ENCODE measurements at regions of chr15 and their contacts with region 1.

Region 1: DNA sequence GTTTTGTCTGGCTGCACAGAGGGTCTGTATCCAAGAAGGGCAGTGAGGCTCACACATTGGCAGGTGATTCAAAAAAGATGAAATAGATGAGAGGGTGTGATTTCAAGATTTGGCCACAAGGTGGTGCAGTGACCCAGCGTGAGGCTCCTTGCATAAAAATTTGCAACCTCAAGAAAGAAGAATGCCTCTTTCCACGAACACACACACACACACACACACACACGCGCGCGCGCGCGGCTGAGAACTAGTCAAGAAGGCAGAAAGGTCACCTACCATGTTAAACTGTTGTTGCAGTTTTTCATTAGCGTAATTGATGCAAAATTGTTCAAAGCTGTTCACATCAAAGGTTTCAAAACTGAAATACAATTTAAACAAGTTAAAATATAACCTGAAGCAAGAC is 39.2 kb downstream of the MYO5C start:
- DNase-seq: peak; percentile 59 to 79
- H3K4me3 ChIP-seq: no peak overlapping the region
- H3K27ac ChIP-seq: no peak overlapping the region
- H3K4me1 ChIP-seq: peaks cover 11 to 15% (median 11%) of the 10 kb centered on the region in 4 experiments
- H3K27me3 ChIP-seq: no peaks in the 10 kb centered on the region
- CTCF ChIP-seq: peak; percentile 35 to 72 (median 63)
- EP300 ChIP-seq: no peak
- POLR2A ChIP-seq: no peak
- RAD21 ChIP-seq: peak; percentile 82 to 89

Region 2: DNA sequence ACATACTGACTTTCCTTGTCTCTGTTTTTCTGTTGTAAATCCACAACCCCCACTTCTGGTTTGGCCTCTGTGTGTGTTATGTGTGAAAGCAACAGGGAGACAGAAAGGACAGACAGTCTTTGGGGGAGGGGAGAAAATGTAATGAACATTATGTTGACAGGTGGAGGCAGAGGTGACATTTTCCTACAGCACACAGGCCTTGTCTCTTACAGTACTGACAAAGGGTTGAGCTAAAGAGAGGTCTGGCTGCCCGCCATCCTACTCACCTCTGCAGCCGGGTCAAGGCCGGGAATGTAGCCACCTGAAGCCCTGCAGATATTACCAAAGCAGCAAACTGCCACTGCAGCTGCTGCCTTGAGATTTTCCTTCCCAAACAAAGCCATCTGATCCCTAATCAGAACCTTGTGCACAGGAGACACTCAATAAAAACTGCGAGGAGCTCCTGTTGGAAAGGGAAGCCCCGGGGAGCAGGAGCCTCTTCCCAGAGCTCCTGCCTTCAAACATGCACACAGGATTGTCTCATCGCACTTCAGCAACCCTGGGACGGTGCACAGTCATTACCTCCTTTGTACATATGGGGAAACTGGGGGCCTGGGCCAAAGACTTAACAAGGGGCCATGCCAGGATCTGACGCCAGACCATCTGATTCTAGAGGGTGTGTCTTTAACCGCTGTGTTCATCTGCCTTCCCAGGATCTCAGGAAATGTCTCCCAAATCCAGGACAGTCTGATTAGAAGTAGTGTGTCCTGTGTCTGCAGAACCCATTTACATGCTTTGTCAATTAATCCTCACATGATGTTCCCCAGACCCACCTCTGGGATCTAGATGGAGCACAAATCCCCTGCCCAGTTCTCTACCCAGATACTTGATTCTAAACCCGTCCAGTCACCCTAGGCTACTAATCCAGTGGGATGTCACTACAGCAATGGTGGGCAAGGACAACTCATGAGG is 25.0 kb after region 1 on chr15:
- CTCF ChIA-PET with region 1: interaction called, 33 read pairs
- POLR2A ChIA-PET with region 1: interaction called, 8 read pairs
- DNase-seq: no peak
- H3K4me3 ChIP-seq: no peak overlapping the region
- H3K27ac ChIP-seq: no peak overlapping the region
- H3K4me1 ChIP-seq: no peaks in the 10 kb centered on the region
- H3K27me3 ChIP-seq: no peaks in the 10 kb centered on the region
- CTCF ChIP-seq: no peak
- EP300 ChIP-seq: no peak
- POLR2A ChIP-seq: no peak
- RAD21 ChIP-seq: no peak

Region 3: DNA sequence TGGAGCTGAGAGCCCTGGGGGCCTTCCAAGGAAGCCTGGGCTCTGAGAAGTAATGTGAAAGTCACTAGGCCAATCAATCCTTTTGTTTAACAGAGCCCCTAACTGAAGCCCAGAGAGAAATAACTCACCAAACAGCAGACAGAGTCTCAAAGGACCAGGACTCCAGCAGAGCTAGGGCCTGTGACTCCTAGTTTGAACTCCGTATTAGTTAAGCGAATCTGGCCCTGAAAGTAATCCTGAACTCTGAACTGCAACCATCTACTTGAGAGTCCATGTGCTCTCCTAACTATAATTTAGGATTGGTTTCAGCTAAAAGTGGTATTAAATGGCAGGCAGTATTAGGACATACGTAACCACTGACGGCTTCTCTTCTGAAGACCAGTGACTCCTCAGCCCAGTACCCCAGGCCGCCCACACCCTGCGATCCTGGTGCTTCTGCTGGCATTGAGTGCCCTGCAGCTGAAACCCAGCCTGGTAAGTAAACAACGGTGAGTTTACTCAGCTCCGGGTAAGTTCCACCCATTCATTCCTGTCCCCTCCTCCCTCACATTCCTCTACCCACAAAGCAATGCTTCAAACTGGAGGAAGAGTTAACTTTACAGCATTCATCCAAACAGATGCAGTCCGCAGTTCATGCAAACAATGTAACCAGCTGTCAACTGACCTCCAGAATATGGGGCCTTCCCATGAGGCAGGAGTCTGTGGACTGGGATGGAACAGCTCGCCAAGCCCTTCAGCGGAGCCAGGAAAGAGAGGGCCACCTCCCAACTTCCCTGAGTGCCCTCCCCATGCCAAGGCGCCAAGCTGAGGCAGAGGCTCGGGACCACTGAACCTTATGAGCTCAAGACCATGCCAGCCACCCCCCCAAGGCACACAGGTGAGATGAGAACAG is 31.9 kb after region 1 on chr15:
- CTCF ChIA-PET with region 1: interaction called, 14 read pairs
- POLR2A ChIA-PET with region 1: interaction called, 8 read pairs
- DNase-seq: peak in 1 of 2 experiments; percentile 43
- H3K4me3 ChIP-seq: no peak overlapping the region
- H3K27ac ChIP-seq: no peak overlapping the region
- H3K4me1 ChIP-seq: peaks cover 0 to 8% (median 3%) of the 10 kb centered on the region in 4 experiments; a peak in 2 of 7 replicates
- H3K27me3 ChIP-seq: no peaks in the 10 kb centered on the region
- CTCF ChIP-seq: no peak
- EP300 ChIP-seq: no peak
- POLR2A ChIP-seq: no peak
- RAD21 ChIP-seq: no peak

Region 4: GRCh38 chr15:52717894-52718293 is 461.5 kb after region 1 on chr15:
- CTCF ChIA-PET with region 1: interaction called, 10 read pairs
- POLR2A ChIA-PET with region 1: no interaction called
- DNase-seq: no peak
- H3K4me3 ChIP-seq: no peak overlapping the region
- H3K27ac ChIP-seq: no peak overlapping the region
- H3K4me1 ChIP-seq: no peaks in the 10 kb centered on the region
- H3K27me3 ChIP-seq: no peaks in the 10 kb centered on the region; a peak in 1 of 7 replicates
- CTCF ChIP-seq: no peak
- EP300 ChIP-seq: no peak
- POLR2A ChIP-seq: no peak
- RAD21 ChIP-seq: no peak

Region 5: DNA sequence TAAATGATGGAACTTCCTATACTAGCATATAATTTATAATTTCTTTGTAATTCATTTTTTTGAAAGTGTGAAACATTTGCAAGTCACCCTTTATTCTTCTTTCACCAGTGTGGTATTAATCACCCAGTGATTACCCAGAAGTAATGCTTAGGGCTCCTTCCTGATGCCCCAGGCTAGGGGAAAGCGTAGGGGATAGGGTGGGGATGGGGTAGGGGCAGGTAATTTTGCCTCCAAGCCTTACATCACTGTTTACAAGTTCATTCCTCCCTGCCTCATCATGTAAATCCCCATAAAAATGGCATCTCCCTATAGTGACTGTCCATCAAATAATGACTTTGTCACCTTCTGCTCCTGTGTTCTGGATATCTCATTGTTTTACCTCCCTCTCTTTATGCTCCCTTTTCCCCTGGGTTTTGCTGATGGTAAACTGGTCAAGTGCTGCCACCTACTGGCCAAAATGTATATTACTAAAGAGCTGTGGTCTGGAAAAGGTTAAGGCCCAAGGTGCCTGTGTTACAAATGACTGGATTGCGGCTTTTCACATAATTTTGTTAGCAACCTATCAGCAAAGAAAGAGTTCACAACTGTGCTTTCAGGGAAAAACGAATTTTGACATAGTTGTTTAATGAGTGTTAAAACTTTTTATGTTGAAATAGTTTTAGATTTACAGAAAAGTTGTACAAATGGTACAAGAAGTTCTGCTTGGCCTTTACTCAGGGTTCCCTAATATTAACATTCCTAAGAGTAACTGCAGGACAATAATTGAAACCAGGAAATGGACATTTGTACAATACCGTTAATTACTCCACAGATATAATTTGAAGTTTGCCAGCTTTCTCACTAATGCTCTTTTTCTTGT is 479.1 kb after region 1 on chr15:
- CTCF ChIA-PET with region 1: interaction called, 59 read pairs
- POLR2A ChIA-PET with region 1: interaction called, 7 read pairs
- DNase-seq: peak; percentile 25 to 86
- H3K4me3 ChIP-seq: no peak overlapping the region
- H3K27ac ChIP-seq: no peak overlapping the region
- H3K4me1 ChIP-seq: peaks cover 0 to 6% (median 1%) of the 10 kb centered on the region in 4 experiments; a peak in 4 of 7 replicates
- H3K27me3 ChIP-seq: no peaks in the 10 kb centered on the region
- CTCF ChIP-seq: peak in 2 of 3 experiments; percentile 75 to 85; a peak in 3 of 4 replicates
- EP300 ChIP-seq: no peak
- POLR2A ChIP-seq: no peak
- RAD21 ChIP-seq: peak; percentile 97 to 98

Measured in H1 (cell line).